ENCODE measurements at regions of chr5 and their contacts with region 1.

Region 1: DNA sequence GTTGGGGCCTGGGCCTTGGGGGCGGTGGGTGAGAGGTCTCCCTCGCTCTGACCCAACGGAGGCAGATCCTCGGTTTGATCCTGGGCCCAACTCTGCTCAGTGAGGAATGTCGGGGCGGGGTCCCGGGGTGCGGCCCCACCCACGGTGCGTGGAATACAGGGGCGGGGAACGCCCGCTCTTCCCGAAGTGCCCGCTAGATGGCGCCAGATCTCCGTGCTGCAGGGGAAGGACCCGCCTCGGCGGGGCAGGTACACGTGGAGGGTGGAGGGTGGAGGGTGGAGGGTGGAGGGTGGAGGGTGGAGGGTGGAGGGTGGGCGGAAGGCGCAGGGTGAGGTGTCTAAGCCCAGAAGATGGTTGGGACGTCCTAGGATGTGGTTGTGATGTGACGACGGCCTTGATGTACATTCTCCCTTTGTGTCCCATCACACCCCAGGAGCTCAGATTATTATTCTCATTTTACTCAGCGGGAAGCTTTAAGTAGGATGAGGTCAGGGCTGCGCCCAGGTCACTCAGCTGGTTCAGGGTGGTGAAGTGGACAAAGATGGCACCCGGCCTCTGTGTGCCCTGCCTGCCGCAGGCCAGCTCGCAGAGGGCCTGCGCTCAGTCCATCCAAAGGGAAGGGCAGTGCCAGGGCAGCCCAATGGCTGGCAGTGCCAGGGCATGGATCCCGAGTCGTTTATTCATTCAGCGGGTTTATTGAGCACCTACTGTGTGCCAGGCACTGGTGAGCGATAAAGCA is 9.4 kb upstream of the RPS14 start:
- DNase-seq: peak; percentile 57 to 89 (median 82)
- ATAC-seq: peak; percentile 88 to 95 (median 92)
- H3K4me3 ChIP-seq: no peak overlapping the region
- H3K4me3 Mint-ChIP-seq: peak overlapping the region in 1 of 3 donors; percentile 48
- H3K27ac ChIP-seq: no peak overlapping the region
- H3K27ac Mint-ChIP-seq: peak overlapping the region; percentile 48 to 57
- H3K4me1 ChIP-seq: peaks cover 21 to 40% of the 10 kb centered on the region in 2 experiments
- H3K4me1 Mint-ChIP-seq: peaks cover 32 to 43% (median 38%) of the 10 kb centered on the region in 3 donors
- H3K27me3 ChIP-seq: no peaks in the 10 kb centered on the region
- H3K27me3 Mint-ChIP-seq: no peaks in the 10 kb centered on the region

Region 2: DNA sequence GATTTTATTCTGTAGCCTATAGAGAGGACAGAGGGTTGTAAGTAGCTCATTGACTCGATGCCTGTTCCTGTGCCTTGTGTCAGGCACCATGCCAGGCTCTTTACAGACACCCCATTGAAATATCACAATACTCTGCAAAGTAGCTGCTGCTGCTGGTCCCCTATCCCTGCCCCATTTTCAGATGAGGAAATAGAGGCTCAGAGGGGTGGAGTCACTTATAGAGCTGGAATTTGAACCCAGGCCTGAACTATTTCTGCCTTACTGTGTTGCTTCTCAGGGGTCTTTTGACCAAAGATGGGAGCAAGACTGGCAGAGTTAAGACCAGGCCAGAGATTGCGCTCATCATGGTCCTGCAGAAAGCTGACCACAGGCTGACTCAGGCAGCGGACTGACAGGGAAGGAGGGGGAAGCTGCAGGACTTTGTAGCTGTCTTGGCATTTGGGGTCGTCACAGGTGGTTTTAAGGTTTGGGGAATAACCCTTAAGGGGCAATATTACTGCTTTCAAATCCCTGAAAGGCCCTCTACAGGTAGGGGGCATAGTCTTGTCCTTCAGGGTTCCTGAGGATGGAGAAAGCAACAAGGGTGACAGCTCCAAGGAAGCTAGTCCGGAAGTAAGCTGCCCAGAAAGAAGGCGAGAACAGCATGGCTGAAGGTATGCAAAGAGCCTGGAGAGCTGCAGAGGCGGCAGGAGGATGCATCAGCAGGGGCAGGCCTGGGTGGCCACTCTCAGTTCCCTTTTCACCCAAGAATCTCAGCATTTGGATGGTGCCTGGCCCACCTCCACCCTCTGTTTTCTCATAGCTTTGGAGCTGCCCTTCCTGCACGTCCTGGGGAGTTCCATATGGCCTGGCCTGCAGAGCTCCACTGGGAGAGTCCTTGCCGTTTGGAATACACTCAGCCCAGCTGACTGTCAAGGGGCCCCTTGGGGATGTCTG is 30.6 kb after region 1 on chr5:
- CTCF ChIA-PET with region 1: interaction called in 1 of 2 experiments, 6 read pairs
- POLR2A ChIA-PET with region 1: interaction called in 1 of 2 experiments, 11 read pairs
- DNase-seq: peak in 1 of 35 experiments; percentile 32
- ATAC-seq: no peak
- H3K4me3 ChIP-seq: no peak overlapping the region
- H3K4me3 Mint-ChIP-seq: no peak overlapping the region
- H3K27ac ChIP-seq: no peak overlapping the region
- H3K27ac Mint-ChIP-seq: no peak overlapping the region
- H3K4me1 ChIP-seq: peaks cover 0 to 14% of the 10 kb centered on the region in 2 experiments
- H3K4me1 Mint-ChIP-seq: peaks cover 8 to 12% (median 10%) of the 10 kb centered on the region in 3 donors
- H3K27me3 ChIP-seq: peaks cover 0 to 34% of the 10 kb centered on the region in 2 experiments
- H3K27me3 Mint-ChIP-seq: peaks cover 7 to 19% of the 10 kb centered on the region in 2 donors

Region 3: DNA sequence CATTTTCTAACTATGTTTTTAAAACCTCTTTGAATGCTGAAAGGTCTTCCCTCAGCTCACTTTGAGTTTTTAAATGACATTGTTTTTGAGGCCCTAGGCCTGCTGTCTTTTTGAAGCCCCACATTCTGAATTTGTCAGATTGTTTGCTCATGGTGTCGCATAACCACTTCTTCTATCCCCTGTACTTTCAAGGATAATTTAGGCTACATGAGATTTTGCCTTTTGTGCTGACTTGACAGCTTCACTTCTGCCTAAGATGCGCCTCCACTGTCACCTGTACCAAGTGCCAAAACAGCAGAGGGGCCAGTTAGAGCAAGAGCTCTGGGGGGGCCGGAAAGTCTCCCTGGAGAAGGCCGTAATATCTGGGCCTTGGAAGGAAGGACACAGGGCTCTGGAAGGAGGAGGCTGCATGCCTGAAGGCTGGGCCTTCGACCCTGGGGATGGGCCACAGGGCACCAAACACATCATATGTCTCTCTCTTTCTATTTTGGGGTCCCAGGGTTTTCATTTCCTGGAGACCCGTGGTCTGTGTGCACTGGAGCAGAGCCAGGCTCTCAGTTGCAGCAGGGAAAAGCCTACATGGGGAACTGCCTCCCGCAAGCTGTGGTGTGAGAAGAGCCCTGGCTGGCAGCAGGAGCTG is 98.0 kb after region 1 on chr5:
- CTCF ChIA-PET with region 1: no interaction called
- POLR2A ChIA-PET with region 1: no interaction called
- DNase-seq: no peak
- ATAC-seq: no peak
- H3K4me3 ChIP-seq: no peak overlapping the region
- H3K4me3 Mint-ChIP-seq: no peak overlapping the region
- H3K27ac ChIP-seq: no peak overlapping the region
- H3K27ac Mint-ChIP-seq: no peak overlapping the region
- H3K4me1 ChIP-seq: no peaks in the 10 kb centered on the region
- H3K4me1 Mint-ChIP-seq: no peaks in the 10 kb centered on the region
- H3K27me3 ChIP-seq: peaks cover 0 to 10% of the 10 kb centered on the region in 2 experiments
- H3K27me3 Mint-ChIP-seq: no peaks in the 10 kb centered on the region

Measured in T-cell (primary cell).